AG04449 (cell line): ENCODE measurements at regions of chr17 and their contacts with region 1.

Region 1: GRCh38 chr17:50783193-50783660 is 15.9 kb upstream of the ANKRD40CL start:
- DNase-seq: no peak
- H3K4me3 ChIP-seq: no peak overlapping the region
- CTCF ChIP-seq: peak; percentile 99

Region 2: GRCh38 chr17:50560185-50560824 is 222.9 kb before region 1 on chr17 and contains the start of gene CACNA1G:
- CTCF ChIA-PET with region 1: no interaction called
- POLR2A ChIA-PET with region 1: no interaction called
- DNase-seq: no peak
- H3K4me3 ChIP-seq: peak within 1 kb of the TSS; percentile 49
- CTCF ChIP-seq: no peak

Region 3: DNA sequence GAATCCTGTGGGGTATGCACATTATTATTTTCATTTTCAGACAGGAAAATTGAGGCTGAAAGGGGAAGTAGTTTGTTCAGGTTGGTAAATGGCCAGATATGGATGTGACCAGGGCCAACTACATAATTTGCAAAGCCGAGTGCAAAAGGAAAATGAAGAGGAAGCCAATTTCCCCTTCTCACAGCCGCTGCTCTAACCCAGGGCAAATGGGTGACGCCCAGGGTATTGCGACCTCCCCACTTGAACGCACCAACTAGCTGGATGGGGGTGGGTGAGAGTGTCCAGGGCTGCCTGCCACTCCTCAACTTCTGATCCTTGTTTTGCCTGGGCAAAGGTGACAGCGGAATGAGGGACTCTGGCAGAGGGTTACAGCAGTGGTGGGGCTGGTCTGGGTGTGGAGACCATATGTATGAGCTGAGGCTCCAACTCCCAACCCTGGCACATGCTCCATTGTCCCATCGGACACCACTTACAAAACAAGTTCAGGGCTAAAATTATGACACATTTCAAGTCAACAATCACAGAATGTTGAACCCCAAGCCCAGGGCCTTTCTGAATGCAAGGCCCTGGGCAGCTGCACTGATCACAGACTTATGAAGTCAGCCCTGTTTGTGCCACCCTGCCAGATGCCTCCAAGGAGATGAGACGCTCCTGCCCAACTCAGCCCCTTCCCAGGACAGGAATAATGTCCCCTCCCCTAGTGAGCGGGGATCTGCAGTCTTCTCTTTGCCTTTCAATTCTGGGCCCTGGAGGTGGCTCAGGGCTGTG is 17.6 kb before region 1 on chr17:
- CTCF ChIA-PET with region 1: interaction called, 38 read pairs
- POLR2A ChIA-PET with region 1: no interaction called
- DNase-seq: no peak
- H3K4me3 ChIP-seq: no peak overlapping the region
- CTCF ChIP-seq: no peak

Region 4: GRCh38 chr17:50771991-50772785 is 11.0 kb before region 1 on chr17:
- CTCF ChIA-PET with region 1: interaction called, 48 read pairs
- POLR2A ChIA-PET with region 1: no interaction called
- DNase-seq: no peak
- H3K4me3 ChIP-seq: no peak overlapping the region
- CTCF ChIP-seq: no peak

Region 5: GRCh38 chr17:50798424-50799288 is 15.4 kb after region 1 on chr17:
- CTCF ChIA-PET with region 1: interaction called, 81 read pairs
- POLR2A ChIA-PET with region 1: no interaction called
- DNase-seq: no peak
- H3K4me3 ChIP-seq: no peak overlapping the region
- CTCF ChIP-seq: no peak

Region 6: DNA sequence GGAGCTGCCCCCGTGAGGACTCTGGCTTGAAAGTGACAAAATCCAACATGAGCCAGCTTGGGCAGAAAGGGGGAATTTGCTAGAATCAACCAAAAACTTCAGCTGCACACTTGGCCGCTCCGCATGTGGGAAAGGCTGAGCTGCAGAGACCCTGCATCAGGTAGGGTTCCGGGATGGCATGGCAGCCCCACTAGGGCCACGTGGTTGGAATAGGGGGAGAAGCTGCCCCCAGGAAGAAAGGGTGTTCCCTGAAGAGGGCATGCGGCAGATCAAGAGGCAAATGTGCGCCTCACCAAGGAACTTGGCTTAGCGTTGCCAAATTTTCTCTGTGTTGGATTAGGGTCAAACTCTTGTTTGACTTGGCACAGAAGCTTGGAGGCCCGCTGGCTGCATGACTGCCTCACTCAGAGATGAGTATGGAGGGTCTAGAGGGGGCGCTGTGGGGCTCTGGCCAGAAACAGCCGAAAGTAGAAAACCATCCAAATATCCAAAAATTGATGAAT is 23.0 kb after region 1 on chr17:
- CTCF ChIA-PET with region 1: interaction called, 81 read pairs
- POLR2A ChIA-PET with region 1: interaction called, 3 read pairs
- DNase-seq: no peak
- H3K4me3 ChIP-seq: no peak overlapping the region
- CTCF ChIP-seq: no peak

Region 7: DNA sequence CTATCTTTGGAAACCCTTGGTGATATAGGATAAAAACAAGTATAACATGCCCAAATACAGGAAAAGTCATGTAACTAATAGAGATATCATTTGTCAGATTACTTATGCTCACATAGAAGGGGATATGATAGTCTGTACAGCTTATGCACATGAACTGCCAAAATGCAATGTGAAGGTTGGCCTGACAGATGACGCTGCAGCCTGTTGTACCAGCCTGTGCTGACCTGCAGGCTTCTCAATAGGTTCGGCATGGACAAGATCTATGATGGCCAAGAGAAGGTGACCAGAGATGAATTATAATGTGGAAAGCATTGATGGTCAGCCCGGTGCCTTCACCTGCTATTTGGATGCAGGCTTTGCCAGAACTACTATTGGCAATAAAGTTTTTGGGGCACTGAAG is 64.8 kb after region 1 on chr17:
- CTCF ChIA-PET with region 1: interaction called, 516 read pairs
- POLR2A ChIA-PET with region 1: no interaction called
- DNase-seq: no peak
- H3K4me3 ChIP-seq: no peak overlapping the region
- CTCF ChIP-seq: no peak

Region 8: DNA sequence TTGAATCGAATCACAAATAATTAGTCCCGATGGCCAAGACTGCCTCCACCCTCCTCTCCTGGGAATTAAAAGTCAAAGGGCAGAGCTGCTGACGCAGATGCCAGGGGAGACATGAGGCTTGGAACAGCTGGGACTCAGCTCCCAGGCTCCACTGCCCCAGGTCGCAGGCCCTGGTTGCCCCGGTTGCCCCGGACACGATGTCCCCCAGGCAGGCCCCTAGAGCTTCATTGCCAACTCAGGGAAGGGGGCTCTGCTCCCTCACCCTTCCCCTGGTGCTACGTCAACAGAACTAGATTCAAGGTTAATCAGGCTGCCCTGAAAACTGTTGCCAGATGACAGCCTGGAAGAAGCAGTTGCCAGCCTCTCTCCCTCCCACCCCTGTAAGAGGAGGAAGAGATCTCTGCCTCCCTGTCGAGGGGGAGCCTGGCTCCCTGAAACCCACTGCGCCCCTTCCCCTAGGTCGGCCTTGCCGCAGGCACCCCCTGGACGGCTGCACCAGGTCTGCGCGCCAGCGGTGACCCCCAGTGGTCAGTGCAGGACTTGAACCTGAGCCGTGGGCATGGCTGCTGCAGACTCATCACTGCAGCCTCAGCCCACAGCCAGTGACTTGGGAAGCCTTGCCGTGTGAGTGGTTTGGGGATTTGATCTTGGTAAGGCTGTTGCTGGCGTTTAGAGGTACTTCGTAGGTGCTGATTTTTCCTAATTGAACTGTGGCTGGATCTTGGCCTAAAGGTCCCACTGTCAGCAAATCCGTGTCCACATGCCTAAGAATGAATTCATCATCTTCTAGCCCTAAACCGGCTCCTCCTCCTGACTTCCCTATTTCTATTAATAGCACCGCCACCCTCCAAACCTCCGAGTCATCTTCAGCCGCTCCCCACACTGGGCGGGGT is 167.0 kb after region 1 on chr17:
- CTCF ChIA-PET with region 1: interaction called, 58 read pairs
- POLR2A ChIA-PET with region 1: no interaction called
- DNase-seq: peak; percentile 63
- H3K4me3 ChIP-seq: peak overlapping the region; percentile 23; the same call in 1 of the 2 replicates
- CTCF ChIP-seq: peak; percentile 79